Common myeloid progenitor, CD34-positive (primary cell): ENCODE measurements at regions of chr4 and their contacts with region 1.

Region 1: DNA sequence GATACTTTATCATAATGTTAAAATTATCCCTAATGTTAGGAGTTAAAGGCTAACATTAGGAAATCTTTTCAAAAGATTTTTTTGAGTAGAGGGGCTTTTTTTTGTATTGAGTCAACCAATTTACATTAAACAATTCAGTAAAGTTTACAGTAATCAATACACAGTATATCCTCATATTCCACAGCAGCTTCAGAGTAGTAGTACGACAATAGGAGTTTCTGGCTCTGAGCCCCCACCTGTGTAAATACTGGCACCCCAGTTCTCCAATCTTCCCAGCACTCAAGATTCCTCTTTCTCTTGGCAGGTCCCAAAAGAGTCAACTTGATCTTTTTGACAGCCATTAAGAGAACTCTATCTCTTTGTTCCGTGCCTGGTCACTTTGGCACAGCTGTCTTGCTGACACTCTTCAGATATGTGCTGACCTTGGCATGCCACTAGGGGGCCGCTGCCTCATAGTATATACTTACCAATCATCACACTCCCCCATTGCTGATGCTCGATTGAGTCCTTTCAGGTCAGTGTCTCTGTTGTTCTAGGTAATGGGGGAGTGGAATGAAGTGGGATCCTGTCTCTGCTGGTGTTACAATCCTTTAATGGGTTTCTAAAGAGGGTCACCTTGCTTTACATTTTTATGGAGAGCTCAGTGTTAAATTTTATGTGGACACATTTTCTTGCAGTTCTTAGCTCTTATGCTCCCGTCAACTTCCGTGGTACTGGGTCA is 19.5 kb upstream of the CCNI start:
- DNase-seq: peak; percentile 68 to 73 (median 73)
- H3K4me3 ChIP-seq: no peak overlapping the region
- H3K27ac ChIP-seq: no peak overlapping the region
- H3K4me1 ChIP-seq: peaks cover 10 to 34% (median 30%) of the 10 kb centered on the region in 4 experiments
- H3K27me3 ChIP-seq: no peaks in the 10 kb centered on the region

Region 2: DNA sequence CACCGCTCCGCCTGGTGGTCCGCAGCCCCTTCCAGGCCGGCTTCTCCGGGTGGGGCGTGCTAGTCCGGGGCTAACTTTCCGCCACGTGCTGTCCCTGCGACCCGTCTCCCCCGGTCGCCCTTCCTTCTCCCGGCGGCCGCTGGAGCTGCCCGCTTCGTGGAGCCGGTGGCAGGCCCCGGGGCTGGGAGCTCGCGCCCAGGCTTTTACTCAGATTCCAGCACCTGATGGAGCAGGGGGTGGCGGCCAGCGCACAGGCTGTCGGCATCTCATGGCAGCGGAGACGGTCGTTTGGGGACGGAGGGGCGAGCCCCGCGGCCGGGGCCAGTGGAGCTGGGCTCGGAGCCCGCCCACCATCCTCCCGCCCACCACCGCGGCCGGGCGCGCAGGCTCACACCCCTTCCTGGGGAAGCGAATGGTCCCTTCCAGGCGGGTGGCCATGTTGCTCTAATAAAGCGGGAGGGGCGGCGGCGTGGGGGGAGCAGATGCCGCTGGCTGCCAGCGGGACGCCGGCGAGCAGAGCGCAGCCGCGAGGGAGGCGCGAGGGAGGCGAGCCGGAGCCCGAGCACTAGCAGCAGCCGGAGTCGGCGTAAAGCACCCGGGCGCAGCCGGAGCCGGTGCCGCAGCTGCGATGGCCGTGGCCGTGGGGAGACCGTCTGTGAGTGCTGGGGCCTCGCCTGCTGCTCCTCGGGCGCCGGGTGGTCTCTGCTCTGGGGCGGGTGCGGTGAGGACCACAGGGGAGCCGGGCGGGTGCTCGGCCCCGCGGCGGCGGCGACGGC is 145.8 kb before region 1 on chr4 and contains the start of gene SEPTIN11:
- CTCF ChIA-PET with region 1: no interaction called
- POLR2A ChIA-PET with region 1: no interaction called
- DNase-seq: peak; percentile 92 to 97 (median 96)
- H3K4me3 ChIP-seq: peak within 1 kb of the TSS; percentile 84 to 97 (median 89)
- H3K27ac ChIP-seq: peak within 1 kb of the TSS; percentile 25 to 79
- H3K4me1 ChIP-seq: peaks cover 16 to 45% (median 32%) of the 10 kb centered on the region in 4 experiments
- H3K27me3 ChIP-seq: no peaks in the 10 kb centered on the region

Region 3: DNA sequence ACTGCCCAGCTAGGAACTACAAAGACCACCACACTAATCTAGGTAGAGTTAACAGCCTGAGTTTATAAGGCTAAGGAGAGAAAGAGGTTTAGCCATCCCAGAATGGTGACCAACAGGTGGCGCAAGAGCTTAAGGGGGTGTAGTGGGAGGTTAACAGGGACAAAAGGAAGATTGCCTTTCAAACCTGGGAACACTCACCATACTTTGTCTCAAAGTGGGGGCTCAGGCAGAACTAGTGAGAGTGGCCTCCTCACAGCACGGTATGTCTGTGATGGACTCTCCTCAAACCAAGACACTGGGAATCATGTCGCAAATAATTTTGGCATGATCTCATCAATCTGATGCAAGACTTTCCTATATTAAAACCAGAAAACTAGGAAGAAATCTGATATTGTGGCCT is 42.9 kb before region 1 on chr4:
- CTCF ChIA-PET with region 1: interaction called, 10 read pairs
- POLR2A ChIA-PET with region 1: no interaction called
- DNase-seq: peak; percentile 70 to 80 (median 73)
- H3K4me3 ChIP-seq: no peak overlapping the region
- H3K27ac ChIP-seq: no peak overlapping the region
- H3K4me1 ChIP-seq: peaks cover 0 to 3% (median 0%) of the 10 kb centered on the region in 4 experiments
- H3K27me3 ChIP-seq: no peaks in the 10 kb centered on the region

Region 4: GRCh38 chr4:77075869-77076799 is 19.1 kb before region 1 on chr4 and contains the start of gene CCNI:
- CTCF ChIA-PET with region 1: interaction called, 56 read pairs
- POLR2A ChIA-PET with region 1: interaction called, 7 read pairs
- DNase-seq: peak; percentile 98
- H3K4me3 ChIP-seq: peak within 1 kb of the TSS; percentile 79 to 99 (median 93)
- H3K27ac ChIP-seq: peak within 1 kb of the TSS; percentile 100
- H3K4me1 ChIP-seq: peaks cover 21 to 55% (median 46%) of the 10 kb centered on the region in 4 experiments
- H3K27me3 ChIP-seq: no peaks in the 10 kb centered on the region

Region 5: GRCh38 chr4:77082886-77083608 is 12.2 kb before region 1 on chr4:
- CTCF ChIA-PET with region 1: interaction called, 56 read pairs
- POLR2A ChIA-PET with region 1: interaction called, 7 read pairs
- DNase-seq: no peak
- H3K4me3 ChIP-seq: no peak overlapping the region
- H3K27ac ChIP-seq: no peak overlapping the region
- H3K4me1 ChIP-seq: peaks cover 2 to 12% (median 6%) of the 10 kb centered on the region in 4 experiments
- H3K27me3 ChIP-seq: no peaks in the 10 kb centered on the region

Region 6: GRCh38 chr4:77126809-77127208 is 31.5 kb after region 1 on chr4:
- CTCF ChIA-PET with region 1: interaction called, 31 read pairs
- POLR2A ChIA-PET with region 1: no interaction called
- DNase-seq: peak; percentile 55 to 94 (median 90)
- H3K4me3 ChIP-seq: no peak overlapping the region
- H3K27ac ChIP-seq: no peak overlapping the region
- H3K4me1 ChIP-seq: peaks cover 7 to 29% (median 17%) of the 10 kb centered on the region in 4 experiments
- H3K27me3 ChIP-seq: no peaks in the 10 kb centered on the region

Region 7: GRCh38 chr4:77132652-77133312 is 37.5 kb after region 1 on chr4:
- CTCF ChIA-PET with region 1: interaction called, 31 read pairs
- POLR2A ChIA-PET with region 1: no interaction called
- DNase-seq: peak in 1 of 3 donors; percentile 19
- H3K4me3 ChIP-seq: no peak overlapping the region
- H3K27ac ChIP-seq: no peak overlapping the region
- H3K4me1 ChIP-seq: peaks cover 0 to 13% (median 9%) of the 10 kb centered on the region in 4 experiments
- H3K27me3 ChIP-seq: no peaks in the 10 kb centered on the region

Region 8: GRCh38 chr4:77156533-77156911 is 61.3 kb after region 1 on chr4:
- CTCF ChIA-PET with region 1: interaction called, 38 read pairs
- POLR2A ChIA-PET with region 1: interaction called, 6 read pairs
- DNase-seq: peak; percentile 100
- H3K4me3 ChIP-seq: peak overlapping the region; percentile 72 to 99 (median 96)
- H3K27ac ChIP-seq: peak overlapping the region; percentile 94 to 97
- H3K4me1 ChIP-seq: peaks cover 32 to 55% (median 41%) of the 10 kb centered on the region in 4 experiments
- H3K27me3 ChIP-seq: no peaks in the 10 kb centered on the region